Activated CD4-positive, alpha-beta T cell treated with anti-CD3 and anti-CD28 coated beads, Interleukin-2, amount 10 ng/mL, durations not matched to agents 24 days and 14 days (primary cell): ENCODE measurements at regions of chr6 and their contacts with region 1.

Region 1: GRCh38 chr6:156857573-156857972 is 80.4 kb downstream of the ARID1B start:
- DNase-seq: no peak
- H3K4me3 Mint-ChIP-seq: no peak overlapping the region
- H3K27ac Mint-ChIP-seq: peak overlapping the region; percentile 92
- H3K4me1 Mint-ChIP-seq: peaks cover 48% of the 10 kb centered on the region
- H3K27me3 Mint-ChIP-seq: no peaks in the 10 kb centered on the region

Region 2: DNA sequence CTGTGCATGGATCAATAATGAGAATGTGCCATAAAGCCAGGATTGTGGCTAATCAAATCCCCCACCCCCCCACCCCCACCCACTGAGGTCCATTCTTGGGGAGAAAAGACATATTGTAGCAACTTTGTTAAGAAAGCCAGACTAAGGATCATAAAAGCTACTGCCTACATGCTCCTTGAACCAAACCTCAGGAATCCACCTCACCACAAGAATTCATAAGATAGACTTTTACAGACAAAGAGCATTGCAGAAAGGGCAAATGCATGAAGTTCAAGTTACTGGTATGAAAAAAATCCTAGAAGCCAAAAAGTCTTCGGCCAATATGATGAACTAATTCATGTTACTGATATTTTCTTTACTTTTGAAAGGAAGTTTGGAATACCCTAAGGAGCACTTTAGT is 268.3 kb before region 1 on chr6:
- intact Hi-C with region 1: no loop called
- DNase-seq: no peak
- H3K4me3 Mint-ChIP-seq: no peak overlapping the region
- H3K27ac Mint-ChIP-seq: no peak overlapping the region
- H3K4me1 Mint-ChIP-seq: no peaks in the 10 kb centered on the region
- H3K27me3 Mint-ChIP-seq: peaks cover 11% of the 10 kb centered on the region

Region 3: GRCh38 chr6:156791320-156791850 is 66.2 kb before region 1 on chr6:
- intact Hi-C with region 1: no loop called
- DNase-seq: no peak
- H3K4me3 Mint-ChIP-seq: no peak overlapping the region
- H3K27ac Mint-ChIP-seq: no peak overlapping the region
- H3K4me1 Mint-ChIP-seq: peaks cover 40% of the 10 kb centered on the region
- H3K27me3 Mint-ChIP-seq: no peaks in the 10 kb centered on the region

Region 4: GRCh38 chr6:156957931-156958547 is 100.5 kb after region 1 on chr6:
- intact Hi-C with region 1: loop called (anchors 5 kb)
- DNase-seq: no peak
- H3K4me3 Mint-ChIP-seq: no peak overlapping the region
- H3K27ac Mint-ChIP-seq: peak overlapping the region; percentile 72
- H3K4me1 Mint-ChIP-seq: peaks cover 34% of the 10 kb centered on the region
- H3K27me3 Mint-ChIP-seq: no peaks in the 10 kb centered on the region

Region 5: GRCh38 chr6:157107915-157108651 is 250.5 kb after region 1 on chr6:
- intact Hi-C with region 1: loop called (anchors 5 kb)
- DNase-seq: no peak
- H3K4me3 Mint-ChIP-seq: no peak overlapping the region
- H3K27ac Mint-ChIP-seq: peak overlapping the region; percentile 78
- H3K4me1 Mint-ChIP-seq: peaks cover 30% of the 10 kb centered on the region
- H3K27me3 Mint-ChIP-seq: no peaks in the 10 kb centered on the region